Calu3 (cell line): ENCODE measurements at regions of chr5 and their contacts with region 1.

Region 1: DNA sequence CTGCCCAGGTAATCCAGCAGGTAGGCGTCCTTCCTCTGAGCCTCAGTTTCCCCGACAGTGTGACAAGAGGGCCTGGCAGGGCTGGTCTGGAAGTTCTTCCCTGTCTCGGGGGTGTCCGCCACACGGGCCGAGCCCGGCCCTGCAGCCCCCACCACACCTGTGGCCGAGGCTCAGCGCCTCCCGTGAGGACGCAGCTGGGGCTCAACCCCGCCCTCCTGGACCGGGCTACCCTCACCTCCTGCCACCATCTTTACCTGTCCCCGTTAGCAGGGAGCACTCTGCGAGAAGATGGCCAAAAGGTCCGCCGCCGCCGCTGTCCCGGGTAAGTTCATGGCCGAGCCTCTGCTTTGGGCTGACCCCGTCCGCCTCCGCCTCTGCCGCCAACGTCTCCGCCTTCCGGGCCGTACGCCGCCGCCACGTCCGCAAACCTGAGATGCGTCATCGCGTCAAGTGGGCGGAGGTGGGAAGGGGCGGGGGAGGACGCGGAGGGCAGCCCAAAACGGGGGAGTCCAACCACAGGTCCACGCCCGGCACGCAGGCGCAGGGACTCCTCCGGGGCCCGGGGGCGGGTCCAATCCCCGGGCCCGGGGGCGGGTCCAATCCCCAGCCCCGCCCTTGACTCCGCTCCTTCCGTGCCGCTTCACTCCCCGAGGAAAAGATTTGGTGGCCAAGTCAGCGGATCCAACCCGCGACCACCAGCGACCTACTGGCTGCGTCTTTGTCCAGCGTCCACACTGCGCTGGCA is at the start of gene LYSMD3:
- DNase-seq: peak; percentile 98
- H3K4me3 Mint-ChIP-seq: peak within 1 kb of the TSS; percentile 71
- H3K27ac Mint-ChIP-seq: peak within 1 kb of the TSS; percentile 48
- H3K4me1 Mint-ChIP-seq: peaks cover 28% of the 10 kb centered on the region
- H3K27me3 Mint-ChIP-seq: peaks cover 20% of the 10 kb centered on the region
- CTCF ChIP-seq: no peak
- total RNA-seq, gene LYSMD3: 25.9 and 27.2 TPM in 2 replicates

Region 2: DNA sequence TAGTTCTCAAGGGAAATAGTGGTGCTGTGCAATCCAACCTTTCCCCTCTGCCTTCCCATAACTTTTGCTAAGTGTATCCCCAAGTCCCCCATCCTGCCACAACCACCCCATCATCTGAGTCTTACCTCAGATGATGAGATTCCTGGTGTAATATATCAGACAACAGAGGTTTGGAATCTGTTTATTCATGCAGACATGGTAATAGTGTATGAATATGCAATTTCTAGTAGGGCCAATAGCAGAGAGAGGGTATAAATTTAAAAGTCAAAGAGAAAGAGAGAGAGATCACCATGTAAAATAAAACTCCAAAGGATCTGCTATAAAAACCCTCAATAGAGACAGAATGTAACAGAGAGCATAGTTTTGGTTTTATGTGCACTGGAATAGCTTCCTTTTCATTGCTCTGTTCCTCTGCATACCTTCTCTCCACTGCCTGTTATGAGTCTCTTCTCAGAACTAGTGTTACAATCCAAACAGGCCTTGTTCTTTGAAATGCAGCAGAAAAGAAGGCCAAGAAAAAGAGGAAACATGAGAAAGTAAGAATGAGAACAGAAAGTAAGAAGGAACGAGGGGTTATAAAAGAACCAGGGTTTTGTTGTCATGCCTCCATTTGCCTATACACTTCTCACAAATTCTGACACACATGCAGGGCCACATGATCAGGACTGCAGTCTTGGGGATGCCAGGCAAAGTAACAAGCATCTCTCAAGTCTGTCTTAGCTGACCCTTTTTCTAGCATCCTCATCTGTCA is 397.8 kb before region 1 on chr5:
- CTCF ChIA-PET with region 1: no interaction called
- intact Hi-C with region 1: no loop called
- DNase-seq: no peak
- H3K4me3 Mint-ChIP-seq: no peak overlapping the region
- H3K27ac Mint-ChIP-seq: no peak overlapping the region
- H3K4me1 Mint-ChIP-seq: peaks cover 22% of the 10 kb centered on the region
- H3K27me3 Mint-ChIP-seq: no peaks in the 10 kb centered on the region
- CTCF ChIP-seq: no peak

Region 3: GRCh38 chr5:90421136-90421535 is 108.2 kb before region 1 on chr5:
- CTCF ChIA-PET with region 1: interaction called, 4 read pairs
- intact Hi-C with region 1: loop called (anchors 5 kb)
- DNase-seq: peak; percentile 44
- H3K4me3 Mint-ChIP-seq: no peak overlapping the region
- H3K27ac Mint-ChIP-seq: no peak overlapping the region
- H3K4me1 Mint-ChIP-seq: peaks cover 8% of the 10 kb centered on the region
- H3K27me3 Mint-ChIP-seq: no peaks in the 10 kb centered on the region
- CTCF ChIP-seq: no peak

Region 4: DNA sequence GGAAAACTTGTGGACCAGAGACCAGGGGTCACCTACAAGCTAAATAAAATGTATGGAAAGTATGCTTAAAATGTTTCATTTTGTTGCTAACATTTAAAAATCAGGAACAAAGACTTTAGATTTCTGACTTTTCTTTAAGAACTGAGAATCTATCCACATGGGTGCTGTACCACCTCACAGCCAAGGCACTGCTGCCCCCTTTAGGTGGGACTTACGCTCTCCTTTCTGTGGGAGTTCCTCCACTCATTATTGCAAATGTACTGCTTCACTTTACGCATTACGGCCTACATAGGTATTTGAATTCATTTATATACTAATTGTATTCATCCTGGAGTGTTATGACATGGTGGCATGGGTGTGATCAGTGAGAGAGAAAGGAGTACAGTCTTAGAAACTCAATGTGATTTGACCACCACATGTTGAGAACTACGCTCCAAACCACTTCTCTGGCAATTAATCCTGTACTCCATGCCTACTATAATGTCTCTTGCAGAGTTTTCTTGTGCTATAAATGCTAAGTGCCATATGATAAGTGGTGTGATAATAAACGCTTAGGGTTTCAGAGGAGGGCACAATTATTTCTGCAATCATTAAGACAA is 95.2 kb before region 1 on chr5:
- CTCF ChIA-PET with region 1: interaction called, 10 read pairs
- intact Hi-C with region 1: no loop called
- DNase-seq: peak; percentile 76
- H3K4me3 Mint-ChIP-seq: no peak overlapping the region
- H3K27ac Mint-ChIP-seq: no peak overlapping the region
- H3K4me1 Mint-ChIP-seq: peaks cover 12% of the 10 kb centered on the region
- H3K27me3 Mint-ChIP-seq: peaks cover 25% of the 10 kb centered on the region
- CTCF ChIP-seq: peak; percentile 71

Region 5: DNA sequence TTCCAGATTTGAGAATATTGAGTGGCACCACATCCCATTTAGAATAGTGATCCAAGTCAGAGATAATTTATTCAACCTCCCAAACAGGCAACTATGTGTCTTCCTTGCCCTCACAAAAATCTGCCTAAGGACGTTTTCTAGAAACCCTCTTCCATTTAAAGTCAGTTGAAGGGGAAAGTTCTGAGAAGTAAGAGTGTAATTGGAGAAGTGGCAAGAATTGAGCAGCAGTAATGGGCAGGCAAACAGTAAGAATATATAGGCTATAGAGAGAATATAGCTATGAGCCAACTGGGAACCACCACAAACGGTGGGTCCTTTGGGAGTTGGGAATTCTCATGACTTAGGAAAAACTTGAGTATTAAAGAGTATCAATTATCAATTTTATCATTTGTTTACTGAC is 88.7 kb before region 1 on chr5:
- CTCF ChIA-PET with region 1: interaction called, 10 read pairs
- intact Hi-C with region 1: loop called (anchors 1 kb)
- DNase-seq: no peak
- H3K4me3 Mint-ChIP-seq: no peak overlapping the region
- H3K27ac Mint-ChIP-seq: no peak overlapping the region
- H3K4me1 Mint-ChIP-seq: peaks cover 20% of the 10 kb centered on the region
- H3K27me3 Mint-ChIP-seq: peaks cover 19% of the 10 kb centered on the region
- CTCF ChIP-seq: no peak

Region 6: DNA sequence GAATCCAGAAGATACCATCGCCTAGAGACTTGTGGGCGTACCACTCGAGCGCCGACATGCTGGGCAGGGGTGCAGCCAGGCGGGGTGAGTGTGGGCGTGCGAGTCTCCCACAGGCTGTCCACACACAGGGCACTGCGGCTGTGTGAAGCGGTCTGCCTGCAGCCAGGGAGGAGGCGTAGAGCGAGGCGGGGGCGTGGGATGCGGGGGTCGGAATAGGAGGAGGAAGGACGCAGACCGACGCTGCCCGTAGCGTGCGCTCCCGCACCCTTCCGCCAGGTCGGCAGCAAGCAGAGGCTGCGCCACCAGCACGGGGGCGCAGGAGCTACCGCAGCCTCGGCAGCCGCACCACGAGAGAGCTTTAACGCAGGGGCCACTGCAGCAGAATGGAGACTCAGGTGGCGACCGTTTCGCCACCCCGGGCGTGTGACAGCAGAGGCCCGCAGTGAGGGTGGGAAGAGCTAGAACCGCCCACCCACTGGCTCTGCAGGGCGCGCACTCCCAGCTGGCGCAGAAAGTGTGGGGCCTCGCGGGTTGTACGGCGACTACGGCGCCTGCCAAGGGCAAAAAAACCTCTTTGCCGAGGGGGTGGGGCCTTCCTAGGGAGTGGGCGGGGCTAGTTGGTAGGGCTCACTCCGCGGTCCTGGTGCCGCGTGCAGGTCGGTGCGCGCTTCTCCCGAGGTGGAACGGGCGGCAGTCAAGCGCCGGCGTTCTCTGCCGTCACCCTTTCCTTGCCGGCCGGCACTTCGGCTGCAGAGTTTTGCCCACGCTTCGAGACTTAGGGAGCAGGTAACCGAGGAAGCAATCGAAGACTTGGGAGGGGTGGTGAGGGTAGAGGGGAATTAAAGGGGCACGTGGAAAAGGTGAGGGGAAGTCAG is 54.9 kb before region 1 on chr5 and contains the starts of genes MBLAC2 and POLR3G:
- CTCF ChIA-PET with region 1: interaction called, 3 read pairs
- intact Hi-C with region 1: loop called (anchors 2 kb)
- DNase-seq: peak; percentile 97
- H3K4me3 Mint-ChIP-seq: peak within 1 kb of the TSS; percentile 99
- H3K27ac Mint-ChIP-seq: peak within 1 kb of the TSS; percentile 78
- H3K4me1 Mint-ChIP-seq: peaks cover 28% of the 10 kb centered on the region
- H3K27me3 Mint-ChIP-seq: no peaks in the 10 kb centered on the region
- CTCF ChIP-seq: peak; percentile 57
- total RNA-seq, gene MBLAC2: 9.6 and 11.0 TPM in 2 replicates
- total RNA-seq, gene POLR3G: 15.0 and 16.6 TPM in 2 replicates

Region 7: DNA sequence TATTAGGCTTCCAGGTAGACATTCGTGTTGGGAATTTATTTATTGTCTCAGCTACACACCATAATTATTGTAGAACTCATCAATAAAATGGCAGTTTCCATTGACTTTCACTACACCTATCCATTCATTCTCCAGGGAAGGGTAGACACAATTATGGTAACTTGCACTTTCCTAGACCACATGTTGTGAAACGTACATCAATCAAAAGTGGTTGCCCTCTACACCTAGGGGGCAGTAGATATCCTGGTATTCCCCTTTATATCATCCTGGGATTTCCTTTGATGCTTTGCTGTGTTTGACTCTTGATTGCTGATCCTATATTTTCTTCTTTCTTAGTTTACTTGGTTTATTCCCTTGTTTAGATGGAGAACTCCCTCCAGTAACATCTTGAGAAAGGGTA is 77.2 kb after region 1 on chr5:
- CTCF ChIA-PET with region 1: interaction called, 5 read pairs
- intact Hi-C with region 1: loop called (anchors 5 kb)
- DNase-seq: peak; percentile 7
- H3K4me3 Mint-ChIP-seq: no peak overlapping the region
- H3K27ac Mint-ChIP-seq: no peak overlapping the region
- H3K4me1 Mint-ChIP-seq: peaks cover 10% of the 10 kb centered on the region
- H3K27me3 Mint-ChIP-seq: peaks cover 49% of the 10 kb centered on the region
- CTCF ChIP-seq: peak; percentile 50

Region 8: GRCh38 chr5:90658620-90659019 is 129.3 kb after region 1 on chr5:
- CTCF ChIA-PET with region 1: no interaction called
- intact Hi-C with region 1: no loop called
- DNase-seq: no peak
- H3K4me3 Mint-ChIP-seq: no peak overlapping the region
- H3K27ac Mint-ChIP-seq: no peak overlapping the region
- H3K4me1 Mint-ChIP-seq: no peaks in the 10 kb centered on the region
- H3K27me3 Mint-ChIP-seq: peaks cover 6% of the 10 kb centered on the region
- CTCF ChIP-seq: no peak

Region 9: GRCh38 chr5:91245871-91246270 is 716.5 kb after region 1 on chr5:
- CTCF ChIA-PET with region 1: no interaction called
- intact Hi-C with region 1: no loop called
- DNase-seq: no peak
- H3K4me3 Mint-ChIP-seq: no peak overlapping the region
- H3K27ac Mint-ChIP-seq: no peak overlapping the region
- H3K4me1 Mint-ChIP-seq: no peaks in the 10 kb centered on the region
- H3K27me3 Mint-ChIP-seq: no peaks in the 10 kb centered on the region
- CTCF ChIP-seq: no peak